Dorsolateral prefrontal cortex (tissue), 120 donors: ENCODE measurements at regions of chr4 and their contacts with region 1.

Region 1: DNA sequence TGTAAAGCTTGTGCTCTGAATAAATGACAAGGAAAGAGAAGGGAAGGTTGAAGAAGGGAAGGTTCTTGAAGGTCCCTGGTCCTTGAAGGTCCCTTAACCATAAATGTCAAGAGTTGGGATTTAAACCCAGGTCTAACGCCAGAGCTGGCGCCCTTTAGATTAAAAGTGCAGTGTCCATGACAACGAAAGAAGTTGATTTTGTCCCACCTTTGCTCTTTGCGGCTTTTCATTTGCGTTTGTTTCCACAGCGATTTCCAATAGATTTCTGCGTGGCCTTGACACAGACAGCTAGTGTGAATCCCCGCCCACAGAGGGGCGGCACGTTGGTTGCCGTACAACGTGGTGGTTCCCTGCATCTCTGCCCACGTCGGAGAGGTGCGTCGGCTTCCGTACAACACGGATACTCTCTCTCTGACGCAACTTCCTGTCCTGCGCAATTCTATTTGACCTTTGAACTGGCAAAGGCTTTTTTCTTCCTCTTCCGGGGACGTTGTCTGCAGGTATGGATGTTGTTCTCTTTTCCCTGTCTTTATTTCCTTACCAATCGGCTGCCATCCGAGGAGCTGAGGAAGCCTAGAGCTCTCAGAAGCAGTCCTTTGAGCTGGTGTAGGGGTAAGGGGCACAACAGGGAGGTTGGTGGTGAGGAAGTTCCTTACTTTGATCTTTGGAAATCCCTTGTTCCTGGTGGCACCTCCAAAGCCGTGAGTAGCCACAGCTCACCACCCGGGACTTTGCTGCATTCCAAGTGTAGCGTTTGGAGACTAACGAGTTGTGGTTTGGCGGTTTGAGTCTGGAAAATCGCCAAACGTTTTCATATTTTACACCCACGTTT is at the start of gene RPL34:
- DNase-seq: peak; percentile 94 to 99 (median 98)
- H3K4me3 ChIP-seq: peak within 1 kb of the TSS; percentile 53 to 99 (median 83)
- H3K27ac ChIP-seq: peak within 1 kb of the TSS in 56 of 59 donors; percentile 33 to 90 (median 77)
- H3K27me3 ChIP-seq: no peaks in the 10 kb centered on the region
- CTCF ChIP-seq: peak in 30 of 56 donors; percentile 4 to 57 (median 28)
- total RNA-seq, gene RPL34: 385 to 625 (median 488) TPM

Region 2: DNA sequence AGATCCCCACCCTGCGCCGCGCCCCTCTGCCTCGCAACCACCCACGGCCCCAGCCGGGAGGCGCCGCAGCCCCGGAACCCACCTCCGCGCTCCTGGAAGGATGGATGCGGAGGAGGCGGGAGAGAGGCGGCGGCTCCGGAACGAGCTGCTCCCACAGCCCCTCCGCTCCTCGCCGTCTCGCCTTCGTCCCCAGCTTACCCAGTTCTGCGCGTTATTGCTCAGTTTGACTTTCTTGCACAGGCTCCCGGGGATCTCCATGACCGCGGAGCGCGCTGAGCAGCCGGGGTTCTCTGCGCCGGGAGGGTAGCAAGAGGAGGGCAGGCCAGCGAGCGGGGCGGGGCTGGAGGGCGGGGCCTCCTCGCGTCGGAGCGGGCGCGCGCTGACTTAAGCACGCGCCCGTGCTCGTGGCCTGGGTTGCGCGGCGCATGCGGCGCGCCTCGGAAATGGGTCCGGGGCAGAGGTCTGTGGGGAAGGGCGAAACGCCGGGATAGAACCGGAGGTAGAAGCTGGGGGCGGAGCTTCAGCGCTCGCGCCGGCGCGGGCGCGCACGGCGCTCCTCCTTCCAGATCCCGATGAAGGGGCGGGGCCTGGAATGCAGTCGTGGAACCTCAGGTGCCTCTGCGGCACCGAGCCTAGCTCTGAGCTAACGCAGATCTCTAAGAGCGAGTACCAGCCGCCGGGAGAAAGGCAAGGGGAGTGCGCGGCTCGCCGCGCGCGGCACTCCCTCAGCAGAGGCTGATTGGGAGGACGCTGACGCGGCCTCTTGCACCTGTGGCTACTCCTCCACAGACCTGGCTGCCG is 900.2 kb before region 1 on chr4 and contains the start of gene PAPSS1:
- intact Hi-C with region 1: loop called in 1 of 2 experiments (anchors 10 kb)
- DNase-seq: peak; percentile 86 to 97 (median 95)
- H3K4me3 ChIP-seq: peak within 1 kb of the TSS; percentile 65 to 99 (median 97)
- H3K27ac ChIP-seq: peak within 1 kb of the TSS; percentile 60 to 96 (median 91)
- H3K27me3 ChIP-seq: no peaks in the 10 kb centered on the region
- CTCF ChIP-seq: peak in 18 of 56 donors; percentile 6 to 38 (median 22)
- total RNA-seq, gene PAPSS1: 39.6 to 102 (median 74.6) TPM

Region 3: GRCh38 chr4:108650212-108651013 is 30.1 kb after region 1 on chr4 and contains the start of gene OSTC:
- intact Hi-C with region 1: loop called (anchors 1 to 2 kb)
- DNase-seq: peak; percentile 93 to 97 (median 96)
- H3K4me3 ChIP-seq: peak within 1 kb of the TSS; percentile 70 to 99 (median 90)
- H3K27ac ChIP-seq: peak within 1 kb of the TSS; percentile 24 to 99 (median 90)
- H3K27me3 ChIP-seq: no peaks in the 10 kb centered on the region
- CTCF ChIP-seq: peak in 54 of 56 donors; percentile 21 to 72 (median 52)
- total RNA-seq, gene OSTC: 11.2 to 28.2 (median 18.2) TPM